Mammary epithelial cell (primary cell): ENCODE measurements at regions of chr7 and their contacts with region 1.

Region 1: GRCh38 chr7:99990460-99990852 is 14.6 kb upstream of the AZGP1 start:
- DNase-seq: no peak
- H3K4me3 ChIP-seq: no peak overlapping the region
- H3K27ac ChIP-seq: no peak overlapping the region
- H3K4me1 ChIP-seq: peaks cover 5% of the 10 kb centered on the region
- H3K27me3 ChIP-seq: no peaks in the 10 kb centered on the region
- CTCF ChIP-seq: no peak

Region 2: DNA sequence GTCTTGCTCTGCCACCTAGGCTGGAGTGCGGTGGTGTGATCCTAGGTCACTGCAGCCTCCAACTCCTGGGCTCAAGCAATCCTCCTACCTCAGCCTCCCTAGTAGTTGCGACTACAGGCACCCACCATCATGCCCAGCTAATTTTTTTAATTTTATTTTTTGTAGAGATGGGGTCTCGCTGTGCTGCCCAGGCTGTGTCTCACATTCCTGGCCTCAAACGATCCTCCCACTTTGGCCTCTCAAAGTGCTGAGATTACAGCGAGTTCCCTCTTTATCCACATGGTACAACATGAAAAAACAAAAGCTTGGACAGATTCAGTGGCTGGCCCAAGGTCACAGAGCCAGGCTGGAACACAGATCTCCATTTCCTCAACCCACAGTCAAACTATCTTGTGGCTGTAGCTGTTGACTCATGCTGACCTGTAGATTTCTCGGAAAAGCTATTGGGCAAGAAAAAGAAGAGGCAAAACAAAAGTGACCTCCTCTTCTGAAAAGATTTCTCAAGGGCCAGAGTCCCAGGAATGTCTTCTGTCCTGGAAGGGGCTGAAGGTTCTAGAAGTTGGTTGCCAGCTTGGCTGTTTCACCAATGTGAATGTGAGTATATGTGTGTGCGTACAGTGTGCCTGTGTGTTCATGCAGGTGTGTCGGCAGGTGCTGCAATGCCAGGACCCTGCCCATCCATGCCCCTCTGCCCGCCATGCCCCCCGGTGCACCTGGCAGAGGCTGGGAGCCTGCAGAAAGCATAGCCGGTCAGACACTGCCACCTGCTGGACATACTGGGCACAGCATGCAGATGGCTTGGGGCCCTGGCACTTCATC is 1149.1 kb before region 1 on chr7:
- CTCF ChIA-PET with region 1: no interaction called
- dilution Hi-C with region 1: no loop called
- in situ Hi-C with region 1: no loop called
- intact Hi-C with region 1: no loop called
- DNase-seq: peak; percentile 23
- H3K4me3 ChIP-seq: no peak overlapping the region
- H3K27ac ChIP-seq: no peak overlapping the region
- H3K4me1 ChIP-seq: no peaks in the 10 kb centered on the region
- H3K27me3 ChIP-seq: no peaks in the 10 kb centered on the region
- CTCF ChIP-seq: peak; percentile 96

Region 3: DNA sequence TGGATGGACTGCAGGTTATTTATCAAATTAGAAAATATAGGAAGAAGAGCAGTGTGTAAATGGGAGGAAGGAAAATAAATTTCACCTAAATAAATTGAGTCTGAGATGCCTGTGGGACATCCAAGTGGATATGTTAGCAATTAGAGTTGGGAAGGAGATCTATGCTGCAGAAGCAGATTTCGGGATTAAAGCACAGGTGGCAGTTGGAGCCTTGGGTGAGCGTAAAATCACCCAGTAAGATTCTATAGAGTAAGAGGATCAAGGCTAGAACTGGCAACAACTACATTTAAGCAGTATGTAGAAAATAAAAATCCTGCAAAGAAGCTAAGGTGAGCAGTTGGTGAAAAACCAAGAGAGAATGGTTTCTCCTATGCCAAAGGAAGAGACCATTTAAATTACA is 79.5 kb before region 1 on chr7:
- CTCF ChIA-PET with region 1: no interaction called
- dilution Hi-C with region 1: no loop called
- in situ Hi-C with region 1: loop called (anchors 5 kb)
- intact Hi-C with region 1: loop called (anchors 1 kb)
- DNase-seq: no peak
- H3K4me3 ChIP-seq: no peak overlapping the region
- H3K27ac ChIP-seq: no peak overlapping the region
- H3K4me1 ChIP-seq: peaks cover 8% of the 10 kb centered on the region
- H3K27me3 ChIP-seq: no peaks in the 10 kb centered on the region
- CTCF ChIP-seq: no peak

Region 4: GRCh38 chr7:99918959-99919813 is 71.3 kb before region 1 on chr7 and contains the start of gene TRIM4:
- CTCF ChIA-PET with region 1: no interaction called
- dilution Hi-C with region 1: no loop called
- in situ Hi-C with region 1: loop called (anchors 5 kb)
- intact Hi-C with region 1: no loop called
- DNase-seq: peak; percentile 94
- H3K4me3 ChIP-seq: peak within 1 kb of the TSS; percentile 79 to 90 (median 86)
- H3K27ac ChIP-seq: peak within 1 kb of the TSS; percentile 73
- H3K4me1 ChIP-seq: peaks cover 26% of the 10 kb centered on the region
- H3K27me3 ChIP-seq: no peaks in the 10 kb centered on the region
- CTCF ChIP-seq: peak; percentile 5 to 49
- total RNA-seq, gene TRIM4: 23.2 to 24.5 TPM

Region 5: DNA sequence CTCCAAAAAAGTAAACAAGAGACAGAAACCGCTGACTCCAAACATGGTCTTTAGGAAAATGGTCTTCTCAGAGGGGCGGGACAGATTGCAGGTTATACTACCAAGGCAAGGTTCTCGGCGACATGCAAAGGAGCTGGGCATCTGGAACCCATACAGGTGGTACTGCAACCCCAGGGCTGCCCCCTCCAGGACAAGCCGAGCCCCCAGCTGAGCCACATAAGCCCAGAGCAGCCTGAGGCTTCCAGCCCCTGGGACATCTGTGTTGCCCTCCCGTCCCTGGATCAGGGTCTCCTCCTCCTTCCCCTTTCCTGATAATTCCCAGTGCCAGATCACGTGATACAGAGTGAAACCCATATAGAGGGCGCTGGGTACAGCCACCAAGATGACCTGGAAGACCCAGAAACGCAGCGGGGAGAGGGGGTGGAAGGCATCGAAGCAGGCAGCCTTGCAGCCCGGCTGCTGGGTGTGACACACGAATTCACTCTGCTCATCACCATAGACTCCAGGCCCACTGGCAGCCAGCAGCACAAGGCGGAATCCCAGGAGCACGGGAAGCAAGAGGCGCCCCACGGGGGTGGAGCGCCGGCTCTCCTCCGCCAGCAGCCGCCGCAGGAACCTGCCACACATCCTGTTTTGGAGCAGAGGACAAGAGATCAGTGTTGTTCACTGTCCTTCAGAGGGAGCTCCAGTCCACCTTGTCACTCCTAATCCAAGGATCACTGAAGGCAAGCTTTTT is 61.3 kb before region 1 on chr7 and contains the start of gene GJC3:
- CTCF ChIA-PET with region 1: no interaction called
- dilution Hi-C with region 1: loop called (anchors 10 kb)
- in situ Hi-C with region 1: no loop called
- intact Hi-C with region 1: loop called (anchors 1 kb)
- DNase-seq: peak; percentile 59
- H3K4me3 ChIP-seq: peak within 1 kb of the TSS in 2 of 3 experiments; percentile 17 to 35
- H3K27ac ChIP-seq: no peak within 1 kb of the TSS
- H3K4me1 ChIP-seq: peaks cover 23% of the 10 kb centered on the region
- H3K27me3 ChIP-seq: no peaks in the 10 kb centered on the region
- CTCF ChIP-seq: peak; percentile 27 to 65
- total RNA-seq, gene GJC3: 0.38 TPM in 1 of 2 donors, not detected in the other

Region 6: GRCh38 chr7:100049441-100050311 is 59.2 kb after region 1 on chr7 and contains the start of gene ZSCAN21:
- CTCF ChIA-PET with region 1: no interaction called
- dilution Hi-C with region 1: no loop called
- in situ Hi-C with region 1: loop called (anchors 5 to 10 kb)
- intact Hi-C with region 1: loop called (anchors 1 kb)
- DNase-seq: peak; percentile 79
- H3K4me3 ChIP-seq: peak within 1 kb of the TSS; percentile 85 to 97 (median 86)
- H3K27ac ChIP-seq: peak within 1 kb of the TSS; percentile 86
- H3K4me1 ChIP-seq: peaks cover 6% of the 10 kb centered on the region
- H3K27me3 ChIP-seq: no peaks in the 10 kb centered on the region
- CTCF ChIP-seq: peak in 1 of 2 donors; percentile 24
- total RNA-seq, gene ZSCAN21: 10.8 to 15.0 TPM